ENCODE measurements at regions of chr17 and their contacts with region 1.

Region 1: DNA sequence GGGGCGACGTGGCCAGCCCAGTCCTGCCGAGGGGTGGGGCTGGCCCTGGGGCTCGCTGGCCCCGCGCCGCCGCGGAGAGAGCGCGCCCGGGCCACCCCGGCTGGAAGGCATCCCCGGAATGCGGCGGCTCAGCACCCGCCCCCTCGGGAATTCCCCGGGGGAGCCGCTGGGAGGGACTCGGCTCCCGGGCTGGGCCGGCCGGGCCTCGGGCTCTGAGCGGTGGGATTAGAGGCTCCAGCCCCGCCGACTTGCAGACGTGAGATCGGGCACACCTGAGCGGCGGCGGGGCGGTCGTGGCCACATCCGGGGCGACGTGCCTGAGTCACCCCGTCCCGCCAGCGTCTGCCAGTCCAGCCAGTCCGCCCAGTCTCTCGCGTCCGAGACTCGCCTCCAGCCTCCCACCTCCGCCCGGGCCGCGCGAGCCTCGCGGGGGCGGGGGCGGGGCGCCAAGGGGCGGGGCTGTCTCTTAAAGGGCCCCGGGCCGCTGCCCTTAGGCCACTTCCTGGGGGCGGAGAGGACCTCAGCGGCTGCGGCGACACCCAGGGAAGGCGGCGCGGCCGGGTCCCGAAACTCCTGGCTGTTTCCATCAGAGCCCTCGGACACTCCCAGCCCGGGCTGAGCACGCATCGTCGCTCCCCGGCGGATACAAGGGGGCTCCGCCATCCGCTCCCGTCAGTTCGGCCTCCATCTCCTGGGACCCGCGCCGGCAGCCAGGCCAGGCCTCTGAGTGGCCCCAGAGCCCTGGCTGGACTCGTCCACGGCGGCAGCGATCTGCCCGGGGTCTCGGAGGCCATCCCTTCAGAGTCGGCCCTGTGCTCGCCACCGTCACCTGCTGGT is at the start of gene KCTD11:
- DNase-seq: peak; percentile 94
- total RNA-seq, gene KCTD11: 9.6 TPM

Region 2: GRCh38 chr17:7306911-7307686 is 44.8 kb before region 1 on chr17 and contains the start of gene EIF5A:
- intact Hi-C with region 1: loop called (anchors 5 kb)
- DNase-seq: peak; percentile 100
- total RNA-seq, gene EIF5A: 263 TPM

Region 3: DNA sequence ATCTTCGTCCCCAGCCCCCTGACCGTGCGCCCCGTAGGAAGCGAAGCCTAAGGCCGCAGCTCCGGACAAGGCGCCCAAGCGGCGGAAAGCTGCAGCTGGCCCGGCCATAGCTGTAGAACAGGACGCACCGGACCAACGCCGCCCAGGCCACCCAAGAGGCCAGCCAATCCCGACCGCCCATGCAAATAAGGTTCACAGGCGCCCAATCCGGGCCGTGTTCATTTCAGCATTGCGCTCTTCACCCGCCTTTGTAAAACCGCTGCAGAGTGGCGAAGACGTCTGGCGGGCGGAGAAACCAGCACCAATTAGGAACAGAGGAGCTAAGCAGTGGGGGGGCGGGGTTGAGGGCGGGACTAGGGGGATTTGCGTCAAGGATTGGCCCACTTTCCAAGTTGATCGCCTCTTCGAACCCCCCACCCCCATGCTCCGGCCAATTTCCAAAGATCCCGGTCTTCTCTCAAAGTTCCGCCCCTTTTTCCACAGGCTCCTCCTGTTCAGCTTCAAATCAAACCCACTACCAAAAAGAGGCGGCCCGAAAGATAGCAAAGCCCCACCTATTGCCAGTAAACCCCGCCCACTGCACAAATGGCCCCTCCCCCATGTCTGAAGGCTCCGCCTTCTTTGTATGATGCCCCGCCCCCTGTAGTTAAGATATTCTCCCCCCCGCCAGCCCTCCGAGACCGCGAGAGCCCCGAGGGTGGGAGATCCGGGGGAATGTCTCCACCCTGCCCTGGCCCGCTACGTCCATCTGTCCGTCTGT is 52.3 kb after region 1 on chr17 and contains the start of gene TMEM256:
- intact Hi-C with region 1: loop called (anchors 2 kb)
- DNase-seq: peak; percentile 99
- total RNA-seq, gene TMEM256: 67.7 TPM

Region 4: GRCh38 chr17:7454980-7455379 is 103.1 kb after region 1 on chr17:
- intact Hi-C with region 1: no loop called
- DNase-seq: no peak

Region 5: GRCh38 chr17:7484067-7484918 is 132.4 kb after region 1 on chr17 and contains the start of gene POLR2A:
- intact Hi-C with region 1: loop called (anchors 1 kb)
- DNase-seq: peak; percentile 99
- total RNA-seq, gene POLR2A: 56.4 TPM